Mammary epithelial cell (primary cell): ENCODE measurements at regions of chr5 and their contacts with region 1.

Region 1: DNA sequence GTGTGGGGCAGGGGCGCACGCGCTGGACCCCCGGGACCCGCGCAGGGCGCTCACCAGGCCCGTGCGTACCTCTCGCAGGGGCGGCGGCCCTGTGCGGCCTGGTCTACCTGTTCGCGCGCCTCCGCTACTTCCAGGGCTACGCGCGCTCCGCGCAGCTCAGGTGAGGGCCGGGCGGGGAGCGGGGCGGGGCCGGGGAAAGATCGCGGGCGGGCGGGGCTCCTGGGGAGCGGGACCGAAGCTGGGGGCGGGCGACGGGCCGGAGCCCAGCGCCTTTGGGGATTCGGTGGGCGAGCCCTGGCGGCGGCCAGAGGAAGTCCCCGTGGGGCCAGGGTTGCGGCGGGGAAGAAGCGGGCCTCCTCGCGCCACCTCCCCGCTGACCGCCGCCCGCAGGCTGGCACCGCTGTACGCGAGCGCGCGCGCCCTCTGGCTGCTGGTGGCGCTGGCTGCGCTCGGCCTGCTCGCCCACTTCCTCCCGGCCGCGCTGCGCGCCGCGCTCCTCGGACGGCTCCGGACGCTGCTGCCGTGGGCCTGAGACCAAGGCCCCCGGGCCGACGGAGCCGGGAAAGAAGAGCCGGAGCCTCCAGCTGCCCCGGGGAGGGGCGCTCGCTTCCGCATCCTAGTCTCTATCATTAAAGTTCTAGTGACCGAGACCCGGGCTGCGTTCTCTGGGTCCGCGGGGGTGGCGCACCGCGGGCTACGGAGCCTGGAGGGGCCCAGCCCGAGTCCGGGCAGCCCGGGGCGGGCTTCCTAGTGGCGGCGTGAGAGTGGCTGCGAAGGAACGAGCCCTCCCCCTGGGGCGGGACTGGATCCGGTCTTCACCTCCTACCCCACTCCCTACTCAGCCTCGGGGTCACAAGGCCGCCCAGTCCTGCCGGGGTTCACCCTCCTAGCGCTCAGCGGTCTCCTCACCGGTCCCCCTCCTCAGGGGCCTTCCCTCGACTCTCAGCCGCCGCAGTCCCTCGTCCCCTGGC is 2.4 kb downstream of the LTC4S start:
- DNase-seq: peak; percentile 86
- H3K4me3 ChIP-seq: peak overlapping the region; percentile 38 to 73 (median 57)
- H3K27ac ChIP-seq: peak overlapping the region; percentile 27
- H3K4me1 ChIP-seq: peaks cover 42% of the 10 kb centered on the region
- H3K27me3 ChIP-seq: no peaks in the 10 kb centered on the region
- CTCF ChIP-seq: peak; percentile 27 to 60

Region 2: GRCh38 chr5:179623003-179623880 is 172.9 kb before region 1 on chr5 and contains the start of gene HNRNPH1:
- CTCF ChIA-PET with region 1: no interaction called
- dilution Hi-C with region 1: no loop called
- in situ Hi-C with region 1: no loop called
- intact Hi-C with region 1: loop called (anchors 5 kb)
- DNase-seq: peak; percentile 97
- H3K4me3 ChIP-seq: peak within 1 kb of the TSS; percentile 81 to 95 (median 89)
- H3K27ac ChIP-seq: peak within 1 kb of the TSS; percentile 90
- H3K4me1 ChIP-seq: peaks cover 34% of the 10 kb centered on the region
- H3K27me3 ChIP-seq: no peaks in the 10 kb centered on the region
- CTCF ChIP-seq: no peak
- total RNA-seq, gene HNRNPH1: 276 to 481 TPM

Region 3: GRCh38 chr5:179678223-179679013 is 117.7 kb before region 1 on chr5:
- CTCF ChIA-PET with region 1: no interaction called
- dilution Hi-C with region 1: no loop called
- in situ Hi-C with region 1: no loop called
- intact Hi-C with region 1: loop called (anchors 10 kb)
- DNase-seq: peak; percentile 90
- H3K4me3 ChIP-seq: peak overlapping the region; percentile 54 to 98 (median 90)
- H3K27ac ChIP-seq: peak overlapping the region; percentile 42
- H3K4me1 ChIP-seq: peaks cover 12% of the 10 kb centered on the region
- H3K27me3 ChIP-seq: no peaks in the 10 kb centered on the region
- CTCF ChIP-seq: peak in 1 of 2 donors; percentile 13

Region 4: DNA sequence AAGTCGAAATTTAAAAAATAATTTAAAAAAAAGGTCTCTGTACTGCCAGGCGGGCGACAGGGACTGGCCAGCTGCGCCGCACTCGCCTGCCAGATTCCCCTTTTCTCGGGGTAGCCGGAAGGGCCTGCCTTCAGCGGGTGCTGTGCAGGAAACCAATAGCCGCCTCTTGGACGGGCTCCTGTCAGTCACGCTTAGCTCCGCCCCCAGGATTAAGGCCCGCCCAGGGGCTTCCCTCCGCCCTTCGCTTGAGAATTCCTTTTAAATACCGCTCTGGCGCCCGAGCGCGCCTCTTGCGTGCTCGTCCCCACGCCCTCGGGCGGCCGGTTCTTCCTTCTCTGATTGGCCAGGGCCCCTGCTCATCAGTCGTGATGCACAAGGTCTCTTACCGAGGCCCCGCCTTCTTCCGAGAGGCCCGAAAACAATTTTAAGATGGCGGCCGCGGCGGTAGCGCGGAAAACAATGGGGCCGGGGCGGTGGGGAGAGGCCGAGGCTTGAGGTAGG is 63.7 kb before region 1 on chr5 and contains the start of gene MAML1:
- CTCF ChIA-PET with region 1: no interaction called
- dilution Hi-C with region 1: no loop called
- in situ Hi-C with region 1: no loop called
- intact Hi-C with region 1: loop called (anchors 1 kb)
- DNase-seq: peak; percentile 100
- H3K4me3 ChIP-seq: peak within 1 kb of the TSS; percentile 58 to 82 (median 60)
- H3K27ac ChIP-seq: peak within 1 kb of the TSS; percentile 67
- H3K4me1 ChIP-seq: peaks cover 8% of the 10 kb centered on the region
- H3K27me3 ChIP-seq: no peaks in the 10 kb centered on the region
- CTCF ChIP-seq: no peak
- total RNA-seq, gene MAML1: 10.5 to 17.7 TPM

Region 5: GRCh38 chr5:179806250-179807222 is 10.4 kb after region 1 on chr5 and contains the start of gene MGAT4B:
- CTCF ChIA-PET with region 1: interaction called, 3 read pairs
- dilution Hi-C with region 1: no loop called
- in situ Hi-C with region 1: no loop called
- intact Hi-C with region 1: loop called (anchors 1 kb)
- DNase-seq: peak; percentile 81
- H3K4me3 ChIP-seq: peak within 1 kb of the TSS; percentile 83 to 89 (median 86)
- H3K27ac ChIP-seq: peak within 1 kb of the TSS; percentile 27
- H3K4me1 ChIP-seq: peaks cover 36% of the 10 kb centered on the region
- H3K27me3 ChIP-seq: no peaks in the 10 kb centered on the region
- CTCF ChIP-seq: no peak
- total RNA-seq, gene MGAT4B: 88.0 to 143 TPM

Region 6: DNA sequence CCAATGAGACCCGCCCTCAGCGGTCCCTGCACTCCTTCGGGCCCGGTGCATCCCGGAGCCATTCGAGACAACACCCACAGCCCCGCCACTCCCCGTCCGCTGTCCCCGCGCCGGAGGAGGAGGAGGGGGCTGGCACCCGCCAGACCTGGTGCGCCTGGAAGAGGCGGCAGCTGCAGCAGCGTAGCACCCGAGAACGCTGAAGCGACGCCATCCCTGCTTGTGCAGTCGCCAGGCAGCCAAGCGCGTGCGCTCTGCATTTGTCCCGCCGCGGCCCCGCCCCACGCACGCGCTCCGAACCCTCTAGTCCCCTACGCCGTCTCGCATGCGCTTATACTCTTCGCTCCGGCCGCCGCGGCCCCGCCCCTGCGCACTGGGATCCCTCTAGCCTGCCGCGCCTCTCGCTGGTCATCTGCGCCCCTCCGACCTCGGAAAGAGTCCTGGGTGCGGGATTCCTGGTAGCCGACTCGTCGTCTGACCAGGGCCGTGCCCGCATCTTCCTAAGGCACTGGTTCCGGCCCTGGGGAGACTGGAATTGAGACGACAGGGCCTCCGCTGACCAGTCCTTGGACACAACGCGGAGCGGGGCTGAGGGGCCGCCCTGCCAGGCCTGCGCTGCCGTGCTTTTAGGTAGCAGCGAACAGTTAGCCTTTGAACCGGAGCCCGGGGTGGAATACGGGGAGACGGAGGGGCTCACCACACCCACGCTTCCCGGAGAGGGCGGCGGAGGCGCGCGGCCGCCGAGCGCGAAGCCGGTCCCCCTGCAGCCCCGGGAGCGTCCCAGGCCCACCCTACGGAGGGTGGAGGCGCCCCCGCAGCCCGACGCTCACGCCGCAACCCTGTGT is 62.7 kb after region 1 on chr5 and contains the start of gene MRNIP:
- CTCF ChIA-PET with region 1: no interaction called
- dilution Hi-C with region 1: no loop called
- in situ Hi-C with region 1: no loop called
- intact Hi-C with region 1: loop called (anchors 2 kb)
- DNase-seq: peak; percentile 92
- H3K4me3 ChIP-seq: peak within 1 kb of the TSS; percentile 91 to 97 (median 92)
- H3K27ac ChIP-seq: peak within 1 kb of the TSS; percentile 63
- H3K4me1 ChIP-seq: peaks cover 5% of the 10 kb centered on the region
- H3K27me3 ChIP-seq: no peaks in the 10 kb centered on the region
- CTCF ChIP-seq: peak in 1 of 2 donors; percentile 25
- total RNA-seq, gene MRNIP: 9.5 to 20.4 TPM